Panc1 (cell line): ENCODE measurements at regions of chr6 and their contacts with region 1.

Region 1: GRCh38 chr6:149834513-149835481 is 29.4 kb downstream of the LRP11 start:
- DNase-seq: peak; percentile 62
- ATAC-seq: peak; percentile 72
- H3K4me3 ChIP-seq: no peak overlapping the region
- H3K27ac ChIP-seq: no peak overlapping the region
- H3K4me1 ChIP-seq: 0 out of 2 replicates have a peak, but pooled peaks cover 3% of the 10 kb centered on the region
- H3K27me3 ChIP-seq: no peaks in the 10 kb centered on the region
- CTCF ChIP-seq: peak; percentile 89

Region 2: DNA sequence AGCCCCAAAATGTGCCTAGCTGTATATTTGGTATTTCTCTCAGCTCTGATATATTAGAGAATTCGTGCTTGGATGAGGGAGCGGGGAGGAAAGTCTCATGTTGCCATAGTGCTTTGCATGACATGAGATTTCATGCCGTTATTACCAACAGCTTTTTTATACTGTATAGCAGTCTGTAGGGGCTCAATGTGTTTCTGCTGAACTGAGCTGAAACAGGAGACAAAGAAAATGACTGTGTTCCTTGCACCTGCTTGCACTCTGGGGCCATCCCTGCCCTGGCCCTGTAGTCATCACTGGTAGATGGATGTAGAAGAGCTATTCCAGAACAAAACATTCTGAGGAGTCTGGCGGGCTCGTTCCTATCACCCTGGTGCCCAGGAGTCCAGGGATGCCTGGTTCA is 1620.1 kb before region 1 on chr6:
- CTCF ChIA-PET with region 1: no interaction called
- POLR2A ChIA-PET with region 1: no interaction called
- in situ Hi-C with region 1: no loop called
- intact Hi-C with region 1: no loop called
- DNase-seq: no peak
- ATAC-seq: no peak
- H3K4me3 ChIP-seq: no peak overlapping the region
- H3K27ac ChIP-seq: no peak overlapping the region
- H3K4me1 ChIP-seq: no peaks in the 10 kb centered on the region
- H3K27me3 ChIP-seq: no peaks in the 10 kb centered on the region
- CTCF ChIP-seq: no peak

Region 3: GRCh38 chr6:149815788-149816187 is 19.0 kb before region 1 on chr6:
- CTCF ChIA-PET with region 1: interaction called, 10 read pairs
- POLR2A ChIA-PET with region 1: no interaction called
- in situ Hi-C with region 1: no loop called
- intact Hi-C with region 1: no loop called
- DNase-seq: no peak
- ATAC-seq: no peak
- H3K4me3 ChIP-seq: no peak overlapping the region
- H3K27ac ChIP-seq: no peak overlapping the region
- H3K4me1 ChIP-seq: no peaks in the 10 kb centered on the region
- H3K27me3 ChIP-seq: no peaks in the 10 kb centered on the region
- CTCF ChIP-seq: no peak

Region 4: GRCh38 chr6:149863697-149864577 is 29.1 kb after region 1 on chr6 and contains the start of gene LRP11:
- CTCF ChIA-PET with region 1: interaction called, 4 read pairs
- POLR2A ChIA-PET with region 1: no interaction called
- in situ Hi-C with region 1: no loop called
- intact Hi-C with region 1: loop called (anchors 1 kb)
- DNase-seq: no peak
- ATAC-seq: peak; percentile 85
- H3K4me3 ChIP-seq: peak within 1 kb of the TSS; percentile 74 to 75
- H3K27ac ChIP-seq: peak within 1 kb of the TSS; percentile 93
- H3K4me1 ChIP-seq: peaks cover 20% of the 10 kb centered on the region
- H3K27me3 ChIP-seq: no peaks in the 10 kb centered on the region
- CTCF ChIP-seq: no peak
- total RNA-seq, gene LRP11: 151 TPM

Region 5: GRCh38 chr6:149876241-149876933 is 41.6 kb after region 1 on chr6:
- CTCF ChIA-PET with region 1: no interaction called
- POLR2A ChIA-PET with region 1: no interaction called
- in situ Hi-C with region 1: no loop called
- intact Hi-C with region 1: no loop called
- DNase-seq: no peak
- ATAC-seq: no peak
- H3K4me3 ChIP-seq: no peak overlapping the region
- H3K27ac ChIP-seq: no peak overlapping the region
- H3K4me1 ChIP-seq: no peaks in the 10 kb centered on the region
- H3K27me3 ChIP-seq: no peaks in the 10 kb centered on the region
- CTCF ChIP-seq: no peak

Region 6: DNA sequence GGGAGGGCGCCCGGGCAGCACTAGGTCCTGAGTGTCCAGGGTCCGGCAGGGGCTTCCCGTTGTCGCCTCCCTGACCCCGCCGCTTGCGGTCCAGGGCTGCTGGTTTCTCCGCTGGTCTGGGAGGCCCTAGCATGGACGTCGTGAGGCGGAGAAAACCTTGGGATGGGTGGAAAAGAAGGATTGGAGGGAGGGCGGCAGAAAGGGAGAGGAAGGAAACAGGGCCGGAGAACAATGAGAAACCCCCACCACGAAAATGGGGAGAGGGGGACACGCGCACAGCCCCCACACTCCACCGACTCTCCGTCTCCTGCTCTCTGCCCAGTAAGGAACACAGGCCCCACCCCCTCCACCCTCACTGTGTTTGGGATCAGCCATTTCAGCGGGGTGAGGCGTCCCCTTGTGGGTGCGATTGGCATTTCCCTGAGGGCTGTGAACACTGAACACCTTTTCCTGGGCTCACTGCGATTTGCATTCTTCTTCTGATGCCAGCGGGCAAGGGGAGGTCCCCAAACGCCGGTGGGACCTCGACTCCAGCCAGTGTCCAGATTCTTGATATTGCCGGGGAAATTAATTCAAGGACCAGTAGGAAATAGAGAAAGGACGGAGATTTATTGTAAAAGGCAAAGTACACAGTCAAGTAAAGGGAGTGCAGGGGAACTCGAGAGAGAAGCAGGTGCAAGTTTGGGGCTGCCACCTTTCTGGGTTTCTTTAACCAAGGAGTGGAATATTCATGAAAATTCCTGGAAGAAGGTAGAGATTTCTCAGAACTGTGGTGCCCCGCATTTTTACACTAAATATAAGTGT is 91.4 kb after region 1 on chr6:
- CTCF ChIA-PET with region 1: interaction called, 4 read pairs
- POLR2A ChIA-PET with region 1: no interaction called
- in situ Hi-C with region 1: no loop called
- intact Hi-C with region 1: loop called (anchors 2 kb)
- DNase-seq: peak; percentile 56
- ATAC-seq: peak; percentile 91
- H3K4me3 ChIP-seq: peak overlapping the region; percentile 48 to 67
- H3K27ac ChIP-seq: peak overlapping the region; percentile 70
- H3K4me1 ChIP-seq: 0 out of 2 replicates have a peak, but pooled peaks cover 3% of the 10 kb centered on the region
- H3K27me3 ChIP-seq: peaks cover 6% of the 10 kb centered on the region; the same call in 1 of the 2 replicates
- CTCF ChIP-seq: peak; percentile 97